HepG2 (cell line): ENCODE measurements at regions of chr5 and their contacts with region 1.

Region 1: GRCh38 chr5:54905943-54906537 is 79.4 kb downstream of the ESM1 start:
- DNase-seq: peak; percentile 30
- ATAC-seq: 0 out of 3 replicates have a peak, but pooled peaks have one; percentile 43
- H3K4me3 ChIP-seq: no peak overlapping the region
- H3K27ac ChIP-seq: no peak overlapping the region
- H3K4me1 ChIP-seq: no peaks in the 10 kb centered on the region
- H3K27me3 ChIP-seq: no peaks in the 10 kb centered on the region; a peak in 1 of 5 replicates
- CTCF ChIP-seq: peak; percentile 65
- EP300 ChIP-seq: no peak
- POLR2A ChIP-seq: no peak
- RAD21 ChIP-seq: peak; percentile 22; the same call in 1 of the 2 replicates

Region 2: DNA sequence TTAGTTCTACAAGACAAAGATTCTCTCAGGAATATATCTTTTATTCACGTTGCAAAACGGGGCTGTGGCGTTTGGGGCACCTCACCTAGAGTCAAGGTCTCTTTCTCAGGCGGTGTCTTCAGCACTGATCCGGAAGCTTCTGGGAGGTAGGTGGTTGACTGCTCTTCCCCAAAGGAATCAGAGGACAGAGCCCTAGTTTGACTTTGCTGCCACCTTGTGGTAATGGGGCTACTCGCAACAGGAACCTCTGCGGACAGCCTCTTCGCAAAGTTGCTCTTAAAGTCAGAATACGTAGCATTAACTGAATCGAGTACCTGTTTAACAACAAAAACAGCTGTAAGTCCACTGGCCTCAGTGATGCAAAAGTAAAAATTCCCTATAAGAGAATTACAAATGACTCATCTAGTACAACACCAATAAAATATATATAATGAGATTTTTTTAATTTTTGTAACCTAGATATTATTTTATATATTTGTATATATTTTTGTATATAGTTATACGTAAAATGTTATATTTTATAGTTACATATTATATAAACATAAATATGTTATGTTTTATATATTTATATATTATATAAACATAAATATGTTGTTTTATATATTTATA is 240.6 kb after region 1 on chr5:
- CTCF ChIA-PET with region 1: interaction called, 19 read pairs
- POLR2A ChIA-PET with region 1: no interaction called
- in situ Hi-C with region 1: no loop called
- intact Hi-C with region 1: loop called (anchors 1 kb)
- DNase-seq: peak; percentile 71
- ATAC-seq: peak; percentile 94
- H3K4me3 ChIP-seq: no peak overlapping the region
- H3K27ac ChIP-seq: no peak overlapping the region
- H3K4me1 ChIP-seq: no peaks in the 10 kb centered on the region
- H3K27me3 ChIP-seq: peaks cover 1 to 6% of the 10 kb centered on the region in 2 experiments; a peak in 2 of 5 replicates
- CTCF ChIP-seq: peak; percentile 91
- EP300 ChIP-seq: no peak
- POLR2A ChIP-seq: no peak
- RAD21 ChIP-seq: peak; percentile 79

Region 3: GRCh38 chr5:55159763-55160492 is 253.9 kb after region 1 on chr5 and contains the start of gene GPX8:
- CTCF ChIA-PET with region 1: interaction called, 6 read pairs
- POLR2A ChIA-PET with region 1: no interaction called
- in situ Hi-C with region 1: loop called (anchors 5 kb)
- intact Hi-C with region 1: loop called (anchors 1 kb)
- DNase-seq: peak; percentile 32
- ATAC-seq: peak; percentile 88
- H3K4me3 ChIP-seq: peak within 1 kb of the TSS; percentile 26 to 48 (median 43); a peak in 5 of 6 replicates
- H3K27ac ChIP-seq: no peak within 1 kb of the TSS
- H3K4me1 ChIP-seq: no peaks in the 10 kb centered on the region
- H3K27me3 ChIP-seq: peaks cover 0 to 16% of the 10 kb centered on the region in 2 experiments; a peak in 1 of 5 replicates
- CTCF ChIP-seq: peak; percentile 65
- EP300 ChIP-seq: no peak
- POLR2A ChIP-seq: no peak
- RAD21 ChIP-seq: peak; percentile 39; the same call in 1 of the 2 replicates
- total RNA-seq, gene GPX8: 0.32 and 0.33 TPM in 2 replicates